ENCODE measurements at regions of chr6 and their contacts with region 1.

Region 1: DNA sequence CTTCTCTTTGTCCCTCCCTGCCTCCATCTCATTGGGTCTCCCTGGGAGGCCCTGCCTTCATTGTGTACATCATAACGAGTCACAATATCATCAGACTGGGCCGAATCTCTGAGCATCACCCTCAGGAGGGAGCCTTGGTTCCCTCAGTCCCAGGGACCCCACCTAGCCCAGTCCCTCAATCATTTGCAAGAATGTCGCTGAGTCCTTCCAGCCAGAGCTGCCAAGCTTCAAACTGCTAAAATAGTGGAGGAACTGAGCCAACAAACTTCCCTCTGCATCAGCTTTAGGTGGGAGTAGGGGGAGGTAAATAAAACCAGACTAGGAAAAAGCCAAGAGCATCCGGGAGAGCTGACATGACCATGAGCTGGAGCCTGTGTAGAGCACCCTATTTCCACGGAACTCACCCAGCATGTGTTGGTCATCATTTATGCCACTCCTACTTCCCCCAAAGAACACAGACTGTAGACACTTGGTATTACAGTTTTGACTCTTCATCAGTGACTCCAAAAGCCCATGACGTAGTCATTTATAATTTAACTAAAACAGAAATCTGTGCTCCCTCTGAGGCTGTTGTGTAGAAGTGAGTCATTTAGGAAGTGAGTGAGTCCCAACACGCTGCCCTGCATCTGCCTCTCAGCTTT is 28.8 kb upstream of the IL17A start:
- DNase-seq: peak; percentile 13
- H3K4me3 Mint-ChIP-seq: peak overlapping the region; percentile 10
- H3K27ac Mint-ChIP-seq: peak overlapping the region; percentile 96
- H3K4me1 Mint-ChIP-seq: peaks cover 53% of the 10 kb centered on the region
- H3K27me3 Mint-ChIP-seq: peaks cover 8% of the 10 kb centered on the region

Region 2: GRCh38 chr6:51792273-51793030 is 365.0 kb before region 1 on chr6:
- intact Hi-C with region 1: no loop called
- DNase-seq: no peak
- H3K4me3 Mint-ChIP-seq: no peak overlapping the region
- H3K27ac Mint-ChIP-seq: no peak overlapping the region
- H3K4me1 Mint-ChIP-seq: no peaks in the 10 kb centered on the region
- H3K27me3 Mint-ChIP-seq: no peaks in the 10 kb centered on the region

Region 3: DNA sequence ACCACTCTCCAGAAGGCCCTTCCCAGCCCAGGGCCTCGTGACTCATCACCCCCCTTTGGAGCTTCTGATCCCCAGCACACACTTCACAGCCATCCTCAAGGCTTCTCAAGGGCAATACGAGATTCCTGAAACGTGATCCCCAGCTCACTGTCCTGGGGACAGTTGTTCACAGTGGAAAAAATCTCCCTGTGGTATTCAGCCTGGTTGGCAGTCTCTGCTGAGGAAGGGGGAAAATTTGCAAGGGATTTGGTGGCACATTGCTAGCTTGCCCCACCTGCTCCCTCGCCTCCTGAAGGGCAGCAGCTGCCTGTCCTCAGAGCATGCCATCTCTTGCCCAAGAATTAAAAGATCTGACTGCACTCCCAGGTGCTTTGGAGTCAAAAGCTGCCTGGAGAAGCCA is 49.3 kb before region 1 on chr6:
- intact Hi-C with region 1: no loop called
- DNase-seq: no peak
- H3K4me3 Mint-ChIP-seq: no peak overlapping the region
- H3K27ac Mint-ChIP-seq: no peak overlapping the region
- H3K4me1 Mint-ChIP-seq: no peaks in the 10 kb centered on the region
- H3K27me3 Mint-ChIP-seq: peaks cover 8% of the 10 kb centered on the region

Region 4: DNA sequence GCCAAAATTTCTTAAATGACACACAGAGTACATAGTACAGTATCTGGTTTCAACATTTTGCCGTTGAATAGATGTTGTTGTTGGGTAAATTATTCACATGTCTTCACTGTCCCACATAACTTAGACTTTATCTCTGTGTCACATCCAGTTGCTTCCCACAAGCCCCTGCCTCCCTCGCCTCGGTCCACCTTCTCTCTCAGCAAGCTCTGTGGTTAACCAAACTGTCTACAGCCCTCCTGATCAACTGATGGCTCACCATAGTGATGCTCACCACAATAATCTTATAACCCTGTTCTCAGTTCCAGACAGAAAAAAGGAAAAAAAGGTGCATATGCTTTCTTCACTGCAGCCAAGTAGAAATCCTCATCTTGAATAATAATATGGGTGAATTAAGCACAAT is 63.9 kb after region 1 on chr6:
- intact Hi-C with region 1: loop called (anchors 1 kb)
- DNase-seq: peak; percentile 36
- H3K4me3 Mint-ChIP-seq: no peak overlapping the region
- H3K27ac Mint-ChIP-seq: peak overlapping the region; percentile 6
- H3K4me1 Mint-ChIP-seq: peaks cover 19% of the 10 kb centered on the region
- H3K27me3 Mint-ChIP-seq: peaks cover 62% of the 10 kb centered on the region

Region 5: DNA sequence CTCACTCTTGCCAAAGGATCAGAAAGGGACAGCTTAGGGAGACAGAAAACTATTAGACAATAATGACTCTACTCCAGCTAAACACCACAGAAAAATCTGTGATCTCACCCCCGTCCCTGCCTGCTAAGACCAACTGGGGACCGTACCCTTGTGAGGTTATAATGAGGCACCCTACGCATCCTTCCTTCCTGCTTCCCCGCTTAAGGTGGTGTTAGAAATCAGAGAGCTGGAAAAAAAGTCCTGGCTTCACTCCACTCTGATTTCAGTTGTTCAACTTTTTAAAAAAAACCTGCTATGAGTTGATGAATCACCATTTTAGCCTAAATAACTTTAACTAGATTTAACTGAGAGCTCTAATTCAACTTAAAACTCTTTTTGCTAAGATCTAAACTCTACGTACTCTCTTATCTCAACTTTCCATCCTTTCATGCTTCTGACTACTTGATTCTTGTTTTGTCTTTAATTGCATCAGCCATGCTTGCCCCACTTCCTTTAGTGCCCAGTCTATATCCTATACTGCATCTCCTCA is 477.7 kb after region 1 on chr6:
- intact Hi-C with region 1: loop called (anchors 1 kb)
- DNase-seq: no peak
- H3K4me3 Mint-ChIP-seq: peak overlapping the region; percentile 13
- H3K27ac Mint-ChIP-seq: peak overlapping the region; percentile 53
- H3K4me1 Mint-ChIP-seq: peaks cover 26% of the 10 kb centered on the region
- H3K27me3 Mint-ChIP-seq: no peaks in the 10 kb centered on the region

Region 6: GRCh38 chr6:52953911-52954839 is 796.8 kb after region 1 on chr6:
- intact Hi-C with region 1: no loop called
- DNase-seq: no peak
- H3K4me3 Mint-ChIP-seq: no peak overlapping the region
- H3K27ac Mint-ChIP-seq: no peak overlapping the region
- H3K4me1 Mint-ChIP-seq: no peaks in the 10 kb centered on the region
- H3K27me3 Mint-ChIP-seq: peaks cover 8% of the 10 kb centered on the region

Measured in activated T-helper 2 cell treated with anti-CD3 and anti-CD28 coated beads, Interferon-gamma antibody, Interleukin-2, Interleukin-4, amounts not matched to agents 10 μg/mL and 5 μg/mL and 100 μg/mL, durations not matched to agents 14 hours and 24 hours and 36 hours (primary cell).